ENCODE measurements at regions of chr1 and their contacts with region 1.

Region 1: GRCh38 chr1:23959041-23959460 is 577 bp upstream of the PNRC2 start:
- DNase-seq: peak; percentile 85
- H3K4me3 Mint-ChIP-seq: peak overlapping the region; percentile 95
- H3K27ac Mint-ChIP-seq: peak overlapping the region; percentile 100
- H3K4me1 Mint-ChIP-seq: peaks cover 34% of the 10 kb centered on the region
- H3K27me3 Mint-ChIP-seq: no peaks in the 10 kb centered on the region
- CTCF ChIP-seq: no peak

Region 2: GRCh38 chr1:23777979-23778814 is 180.9 kb before region 1 on chr1 and contains the start of gene PITHD1:
- CTCF ChIA-PET with region 1: no interaction called
- POLR2A ChIA-PET with region 1: interaction called, 30 read pairs
- intact Hi-C with region 1: no loop called
- DNase-seq: peak; percentile 84
- H3K4me3 Mint-ChIP-seq: peak within 1 kb of the TSS; percentile 88
- H3K27ac Mint-ChIP-seq: peak within 1 kb of the TSS; percentile 96
- H3K4me1 Mint-ChIP-seq: peaks cover 12% of the 10 kb centered on the region
- H3K27me3 Mint-ChIP-seq: no peaks in the 10 kb centered on the region
- CTCF ChIP-seq: no peak
- total RNA-seq, gene PITHD1: 37.7 and 37.8 TPM in 2 replicates

Region 3: DNA sequence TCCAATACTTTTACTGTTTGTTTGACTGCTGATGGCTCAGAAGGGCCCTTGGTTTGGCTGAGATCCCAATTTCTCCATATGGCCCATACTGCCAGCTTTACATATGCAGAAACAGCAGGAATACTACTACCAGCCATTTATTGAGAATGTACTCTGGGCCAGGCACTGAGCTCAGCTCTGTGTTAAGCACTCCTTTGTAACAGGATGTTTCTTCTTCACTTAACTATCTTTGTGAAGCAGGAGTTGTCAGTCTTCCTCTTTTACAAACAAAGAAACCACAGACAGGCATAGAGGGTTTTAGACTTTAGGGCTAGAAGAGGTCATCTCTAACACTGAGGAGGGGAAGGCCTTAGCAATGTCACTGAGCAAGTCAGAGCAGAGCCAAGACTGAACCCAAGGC is 142.1 kb before region 1 on chr1:
- CTCF ChIA-PET with region 1: no interaction called
- POLR2A ChIA-PET with region 1: no interaction called
- intact Hi-C with region 1: no loop called
- DNase-seq: no peak
- H3K4me3 Mint-ChIP-seq: no peak overlapping the region
- H3K27ac Mint-ChIP-seq: no peak overlapping the region
- H3K4me1 Mint-ChIP-seq: no peaks in the 10 kb centered on the region
- H3K27me3 Mint-ChIP-seq: no peaks in the 10 kb centered on the region
- CTCF ChIP-seq: no peak

Region 4: DNA sequence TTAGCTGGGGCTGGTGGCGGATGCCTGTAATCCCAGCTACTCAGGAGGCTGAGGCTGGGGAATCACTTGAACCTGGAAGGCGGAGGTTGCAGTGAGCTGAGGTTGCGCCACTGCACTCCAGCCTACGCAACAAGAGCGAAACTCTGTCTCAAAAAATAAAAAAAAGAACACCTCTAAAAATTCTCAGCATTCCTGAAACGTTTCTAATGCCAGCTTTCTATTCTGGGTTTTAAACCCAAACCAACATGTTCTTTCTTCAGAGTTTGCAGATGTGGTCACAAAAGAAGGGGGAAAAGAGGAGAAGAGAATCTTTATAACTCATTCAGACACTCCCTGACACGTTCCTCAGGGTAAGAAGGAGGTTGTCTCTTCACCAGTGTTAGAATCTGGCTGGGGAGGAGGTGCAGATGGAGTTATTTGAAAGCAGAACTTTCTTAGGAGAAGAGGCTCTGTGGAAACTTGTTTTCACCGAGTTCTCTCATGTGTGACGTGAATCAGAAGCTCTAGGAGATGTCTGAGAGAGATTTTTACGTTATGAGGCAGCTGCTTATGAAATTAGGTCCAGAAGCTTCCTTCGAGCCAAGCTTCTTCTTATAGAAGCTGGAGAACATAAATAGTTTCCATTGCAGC is 28.1 kb before region 1 on chr1:
- CTCF ChIA-PET with region 1: interaction called, 4 read pairs
- POLR2A ChIA-PET with region 1: interaction called, 30 read pairs
- intact Hi-C with region 1: no loop called
- DNase-seq: peak; percentile 42
- H3K4me3 Mint-ChIP-seq: peak overlapping the region; percentile 62
- H3K27ac Mint-ChIP-seq: peak overlapping the region; percentile 84
- H3K4me1 Mint-ChIP-seq: peaks cover 6% of the 10 kb centered on the region
- H3K27me3 Mint-ChIP-seq: no peaks in the 10 kb centered on the region
- CTCF ChIP-seq: no peak

Region 5: DNA sequence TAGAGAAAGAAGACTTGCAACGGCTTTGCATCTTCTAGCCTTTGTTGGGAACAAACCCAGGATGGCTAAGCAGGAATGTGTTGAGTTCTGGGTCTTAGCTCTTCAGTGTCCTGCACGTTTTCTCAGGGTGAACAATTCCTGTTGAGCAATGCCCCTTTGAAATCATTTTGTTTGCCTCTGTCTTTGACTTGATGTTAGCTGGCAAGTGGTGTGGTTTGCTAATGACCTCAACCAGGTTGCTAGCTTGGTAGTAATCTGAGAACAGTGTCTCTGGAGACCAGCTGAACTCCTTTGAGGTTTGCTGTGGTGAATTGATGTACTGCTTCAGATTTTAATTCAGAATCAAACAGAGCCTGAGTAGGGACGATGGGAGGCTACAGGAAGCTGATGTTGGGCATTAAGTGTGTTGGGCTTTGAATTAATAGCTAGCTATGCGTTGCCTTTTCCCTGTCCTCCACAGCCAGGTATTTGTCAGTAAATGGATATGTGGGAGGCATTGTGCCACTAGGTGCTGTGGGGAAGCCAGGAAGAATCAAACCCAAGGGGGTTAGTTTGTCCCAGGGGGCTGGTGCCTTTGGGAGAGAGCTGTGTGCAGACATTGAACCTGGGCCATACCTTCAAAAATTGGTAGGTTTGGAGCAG is 44.4 kb after region 1 on chr1:
- CTCF ChIA-PET with region 1: no interaction called
- POLR2A ChIA-PET with region 1: interaction called, 10 read pairs
- intact Hi-C with region 1: no loop called
- DNase-seq: peak; percentile 85
- H3K4me3 Mint-ChIP-seq: no peak overlapping the region
- H3K27ac Mint-ChIP-seq: peak overlapping the region; percentile 70
- H3K4me1 Mint-ChIP-seq: peaks cover 14% of the 10 kb centered on the region
- H3K27me3 Mint-ChIP-seq: no peaks in the 10 kb centered on the region
- CTCF ChIP-seq: no peak

Region 6: GRCh38 chr1:24027838-24028468 is 68.9 kb after region 1 on chr1:
- CTCF ChIA-PET with region 1: interaction called, 14 read pairs
- POLR2A ChIA-PET with region 1: interaction called, 43 read pairs
- intact Hi-C with region 1: loop called (anchors 1 kb)
- DNase-seq: peak; percentile 57
- H3K4me3 Mint-ChIP-seq: no peak overlapping the region
- H3K27ac Mint-ChIP-seq: peak overlapping the region; percentile 40
- H3K4me1 Mint-ChIP-seq: peaks cover 6% of the 10 kb centered on the region
- H3K27me3 Mint-ChIP-seq: no peaks in the 10 kb centered on the region
- CTCF ChIP-seq: peak; percentile 49

Region 7: DNA sequence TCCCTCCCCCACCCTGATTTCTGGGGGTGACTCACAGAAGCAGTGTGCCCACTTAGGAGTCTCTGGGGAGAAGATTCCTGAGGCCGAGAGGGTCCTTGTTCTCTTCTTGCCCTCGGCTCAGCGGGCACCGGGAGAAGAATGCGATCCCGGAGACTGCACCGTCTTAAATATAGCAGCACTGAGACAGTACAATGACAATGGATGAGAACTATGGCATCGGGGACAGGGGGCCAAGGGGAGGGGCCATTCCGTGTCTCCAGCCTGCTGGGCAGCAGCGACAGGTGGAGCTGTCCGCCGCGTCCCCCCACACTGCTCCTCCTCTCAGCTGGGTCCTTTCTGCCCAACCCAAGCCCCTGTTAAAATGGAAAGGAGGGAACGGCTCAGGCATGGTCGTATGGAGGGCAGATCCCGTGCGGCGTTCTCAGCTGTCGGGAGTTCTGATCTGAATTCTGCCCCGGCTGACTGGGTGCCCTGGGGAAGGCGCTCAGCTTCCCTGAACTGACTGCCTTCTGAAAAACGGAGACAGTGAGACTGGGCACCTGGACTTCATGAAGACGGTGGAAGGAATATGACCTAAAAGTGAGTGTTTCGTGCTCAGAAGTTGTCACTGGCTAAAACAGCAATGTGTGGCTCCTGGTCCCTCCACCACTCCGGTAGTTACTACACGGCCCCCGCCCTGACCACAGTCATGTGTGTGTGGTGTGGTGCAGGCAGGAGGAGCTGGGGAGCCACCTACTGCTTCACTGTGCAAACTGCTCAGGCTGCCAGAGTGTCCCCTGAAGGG is 153.1 kb after region 1 on chr1 and contains the start of gene MYOM3:
- CTCF ChIA-PET with region 1: no interaction called
- POLR2A ChIA-PET with region 1: interaction called, 3 read pairs
- intact Hi-C with region 1: loop called (anchors 10 kb)
- DNase-seq: peak; percentile 66
- H3K4me3 Mint-ChIP-seq: no peak within 1 kb of the TSS
- H3K27ac Mint-ChIP-seq: no peak within 1 kb of the TSS
- H3K4me1 Mint-ChIP-seq: peaks cover 21% of the 10 kb centered on the region
- H3K27me3 Mint-ChIP-seq: no peaks in the 10 kb centered on the region
- CTCF ChIP-seq: peak; percentile 65
- total RNA-seq, gene MYOM3: 0.05 and 0.12 TPM in 2 replicates

Region 8: GRCh38 chr1:24516506-24516905 is 557.5 kb after region 1 on chr1:
- CTCF ChIA-PET with region 1: no interaction called
- POLR2A ChIA-PET with region 1: no interaction called
- intact Hi-C with region 1: no loop called
- DNase-seq: no peak
- H3K4me3 Mint-ChIP-seq: no peak overlapping the region
- H3K27ac Mint-ChIP-seq: no peak overlapping the region
- H3K4me1 Mint-ChIP-seq: peaks cover 15% of the 10 kb centered on the region
- H3K27me3 Mint-ChIP-seq: no peaks in the 10 kb centered on the region
- CTCF ChIP-seq: no peak

Measured in MCF 10A (cell line).